ENCODE measurements at regions of chr7 and their contacts with region 1.

Region 1: DNA sequence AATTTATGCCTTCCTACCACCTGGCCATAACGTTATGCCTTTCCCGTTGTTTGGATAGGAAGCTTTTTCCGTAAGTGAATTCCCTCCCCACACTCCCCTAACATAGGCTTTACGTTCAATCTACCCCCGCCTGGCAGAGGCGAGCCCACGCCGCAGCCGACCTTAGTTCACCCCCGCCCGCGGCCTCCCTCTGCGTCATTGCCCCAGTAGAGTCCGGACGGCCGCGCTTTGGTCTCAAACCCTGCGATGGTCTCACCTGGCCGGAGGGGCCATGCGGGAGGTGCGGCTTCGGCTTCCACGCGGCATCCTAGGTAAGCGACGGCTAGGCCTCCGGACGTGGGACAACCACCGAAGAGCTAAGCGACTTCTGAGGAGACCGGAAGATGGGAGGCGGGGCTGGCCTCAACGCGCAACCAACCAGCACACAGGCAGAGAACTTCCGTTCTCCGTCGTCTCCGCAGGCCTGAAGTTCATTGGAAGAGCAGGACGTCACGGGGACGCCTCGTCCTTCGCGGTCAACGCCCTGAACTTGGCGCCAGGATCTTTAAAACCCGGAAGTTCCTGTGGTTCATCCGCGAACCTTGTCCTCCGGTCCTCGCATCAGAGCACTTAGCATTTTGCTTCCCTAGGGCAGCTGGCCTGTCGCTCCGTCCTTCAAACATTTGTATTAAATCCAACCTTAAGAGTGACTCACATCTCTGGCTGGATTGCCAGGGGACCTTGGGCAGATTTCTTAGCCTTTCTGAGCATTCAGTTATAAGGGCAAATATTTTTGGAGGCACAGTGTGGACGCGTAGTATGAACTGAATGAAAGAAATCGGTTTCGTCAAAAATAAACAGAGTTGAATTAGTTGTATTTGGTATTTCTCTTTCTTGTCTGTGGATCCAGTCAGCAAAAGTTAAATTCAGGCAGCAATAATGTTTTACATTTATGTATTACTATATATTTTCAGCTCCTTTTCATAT is at the start of gene CHCHD2:
- DNase-seq: peak; percentile 94 to 100 (median 96)

Region 2: DNA sequence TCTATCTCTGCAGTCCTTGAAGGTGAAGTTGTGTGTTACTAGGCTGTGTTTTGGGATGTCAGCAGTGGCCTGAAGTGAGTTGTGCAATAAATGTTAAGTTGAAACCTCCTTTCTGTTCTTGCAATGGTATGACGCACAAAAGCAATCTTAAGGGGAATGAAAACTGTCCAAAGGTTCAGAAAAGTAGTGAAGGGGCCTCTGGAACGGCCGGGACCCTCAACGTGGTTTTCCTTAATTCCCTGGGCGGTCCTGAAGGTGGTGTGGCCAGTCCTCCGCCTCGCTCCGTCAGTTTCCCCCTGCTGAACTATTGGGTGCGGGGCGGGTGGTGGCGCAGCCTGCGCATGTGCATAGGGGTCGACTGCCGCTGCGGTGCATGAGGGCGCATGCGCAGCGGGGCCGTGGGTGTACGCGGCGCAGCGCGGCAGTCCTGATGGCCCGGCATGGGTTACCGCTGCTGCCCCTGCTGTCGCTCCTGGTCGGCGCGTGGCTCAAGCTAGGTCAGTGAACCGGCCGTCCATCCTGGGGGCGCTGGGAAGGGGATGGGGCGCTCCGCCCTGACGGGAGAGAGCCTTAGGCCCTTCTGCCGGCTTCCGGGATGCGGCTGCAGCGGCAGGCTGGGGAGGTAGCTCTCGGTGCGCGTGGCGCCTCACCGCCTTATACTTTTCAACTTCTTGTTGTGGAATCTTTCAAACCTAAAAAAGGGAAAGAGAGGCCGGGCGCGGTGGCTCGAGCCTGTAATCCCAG is 42.3 kb before region 1 on chr7 and contains the start of gene SUMF2:
- intact Hi-C with region 1: loop called (anchors 5 kb)
- DNase-seq: peak; percentile 83 to 98 (median 90)

Region 3: GRCh38 chr7:56079450-56080185 is 26.8 kb before region 1 on chr7:
- intact Hi-C with region 1: loop called (anchors 1 kb)
- DNase-seq: peak; percentile 71 to 97 (median 83)

Region 4: GRCh38 chr7:56157238-56157790 is 50.9 kb after region 1 on chr7:
- intact Hi-C with region 1: no loop called
- DNase-seq: no peak